ENCODE measurements at regions of chr10 and their contacts with region 1.

Region 1: GRCh38 chr10:86355571-86356038 is 11.0 kb downstream of the GRID1 start:
- DNase-seq: peak; percentile 73 to 87 (median 75)
- ATAC-seq: peak; percentile 75 to 88 (median 86)
- H3K4me3 ChIP-seq: no peak overlapping the region
- H3K27ac ChIP-seq: peak overlapping the region in 7 of 12 donors; percentile 16 to 84 (median 43)
- H3K4me1 ChIP-seq: peaks cover 0 to 45% (median 14%) of the 10 kb centered on the region in 12 donors
- H3K27me3 ChIP-seq: no peaks in the 10 kb centered on the region
- CTCF ChIP-seq: no peak
- POLR2A ChIP-seq: no peak

Region 2: GRCh38 chr10:86003201-86003621 is 352.4 kb before region 1 on chr10:
- intact Hi-C with region 1: loop called in 4 of 10 experiments (anchors 10 kb)
- DNase-seq: peak in 3 of 5 donors; percentile 30 to 65 (median 30)
- ATAC-seq: peak; percentile 93 to 99 (median 96)
- H3K4me3 ChIP-seq: no peak overlapping the region
- H3K27ac ChIP-seq: peak overlapping the region in 2 of 12 donors; percentile 14 to 37
- H3K4me1 ChIP-seq: peaks cover 0 to 10% (median 0%) of the 10 kb centered on the region in 12 donors
- H3K27me3 ChIP-seq: no peaks in the 10 kb centered on the region
- CTCF ChIP-seq: no peak
- POLR2A ChIP-seq: no peak

Measured in heart left ventricle (tissue), 16 donors.